Thyroid gland (tissue), 4 donors: ENCODE measurements at regions of chr21 and their contacts with region 1.

Region 1: DNA sequence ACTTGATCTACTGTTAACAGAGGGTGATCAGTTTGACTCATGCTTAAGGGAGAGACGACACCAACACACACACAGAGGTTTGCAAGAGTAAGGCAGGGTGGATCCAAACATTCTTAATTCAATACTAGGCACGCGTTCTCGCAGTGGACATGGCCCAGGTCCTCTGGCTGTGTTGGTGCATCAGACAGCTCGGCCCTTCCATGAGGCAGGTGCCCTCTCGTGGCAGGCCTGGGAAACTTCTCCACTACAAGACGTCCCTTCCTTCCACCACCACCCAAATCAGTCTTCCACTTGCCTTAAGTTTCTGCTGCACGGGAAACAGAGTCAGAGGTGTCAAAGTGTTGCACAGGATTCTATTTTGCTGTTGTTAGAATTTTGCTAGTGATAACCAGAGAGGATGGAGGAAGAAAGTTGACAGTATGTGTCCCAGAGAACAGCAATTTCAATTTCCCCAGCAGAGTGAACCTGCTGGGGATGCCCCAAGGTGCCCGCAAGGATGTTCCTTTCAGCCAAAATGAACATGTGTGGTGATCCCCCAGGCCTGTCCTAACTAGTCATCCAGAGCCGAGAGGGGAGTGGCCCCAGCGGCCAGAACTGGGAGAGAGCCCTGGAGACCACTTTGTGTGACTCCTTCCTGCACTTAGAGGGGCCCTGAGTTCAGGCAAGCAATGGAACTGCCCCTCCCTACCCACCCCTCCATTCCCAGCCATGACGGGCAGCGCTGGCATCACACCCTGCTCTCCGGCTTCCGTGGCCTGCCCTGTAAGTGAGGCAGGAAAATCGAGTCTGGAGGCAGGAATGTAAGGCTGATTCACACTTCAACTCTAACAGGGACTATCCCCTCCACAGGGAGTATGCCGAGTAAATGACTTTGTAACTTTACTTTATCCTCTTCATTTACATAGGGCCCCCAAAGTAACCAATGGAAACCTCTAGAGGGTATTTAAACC is 34.8 kb downstream of the MX1 start:
- DNase-seq: peak; percentile 81 to 87
- H3K4me3 ChIP-seq: no peak overlapping the region
- H3K27ac ChIP-seq: peak overlapping the region in 2 of 3 donors; percentile 42 to 70
- H3K4me1 ChIP-seq: peaks cover 18 to 25% of the 10 kb centered on the region in 2 donors
- H3K27me3 ChIP-seq: no peaks in the 10 kb centered on the region
- CTCF ChIP-seq: peak; percentile 40 to 85 (median 82)
- POLR2A ChIP-seq: no peak

Region 2: DNA sequence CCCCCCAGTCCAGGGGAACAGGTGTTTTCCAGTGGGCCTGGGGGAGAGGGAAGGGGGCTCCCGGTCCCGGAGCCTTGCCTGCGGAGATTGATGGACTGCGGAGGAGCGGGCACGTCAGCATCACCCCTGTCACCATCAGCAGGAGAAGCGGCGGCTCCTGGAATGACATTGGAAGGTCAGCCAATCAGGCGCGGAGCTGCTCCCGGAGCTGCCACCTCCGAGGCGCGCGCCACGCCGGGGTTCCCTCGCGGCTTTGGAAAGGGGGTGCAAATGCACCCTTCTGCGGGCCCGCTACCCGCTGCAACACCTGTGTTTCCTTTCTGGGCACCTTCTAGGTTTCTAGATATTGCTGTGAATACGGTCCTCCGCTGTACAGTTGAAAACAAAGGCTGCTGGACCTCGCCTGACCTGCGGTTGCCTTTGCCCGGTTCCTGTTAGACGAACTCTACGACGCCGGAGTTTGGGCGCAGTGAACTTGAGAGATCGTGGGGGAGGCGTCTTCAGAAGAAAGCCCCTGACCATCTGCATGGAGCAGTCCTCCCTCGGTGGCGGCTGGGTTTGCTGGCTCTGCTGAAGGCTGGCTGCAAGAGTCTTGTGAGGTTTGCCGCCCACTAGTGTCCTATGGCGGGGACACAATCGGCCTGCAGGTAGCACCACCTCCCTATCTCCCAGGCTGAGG is 619.2 kb before region 1 on chr21:
- intact Hi-C with region 1: no loop called
- DNase-seq: peak; percentile 41 to 44
- H3K4me3 ChIP-seq: no peak overlapping the region
- H3K27ac ChIP-seq: no peak overlapping the region
- H3K4me1 ChIP-seq: peaks cover 0 to 6% of the 10 kb centered on the region in 2 donors
- H3K27me3 ChIP-seq: no peaks in the 10 kb centered on the region
- CTCF ChIP-seq: peak in 3 of 6 experiments; percentile 22 to 41 (median 39)
- POLR2A ChIP-seq: no peak

Region 3: GRCh38 chr21:41369920-41370839 is 90.7 kb before region 1 on chr21:
- intact Hi-C with region 1: loop called (anchors 10 kb)
- DNase-seq: no peak
- H3K4me3 ChIP-seq: peak overlapping the region in 1 of 3 donors; percentile 8
- H3K27ac ChIP-seq: peak overlapping the region in 1 of 3 donors; percentile 54
- H3K4me1 ChIP-seq: peaks cover 7 to 14% of the 10 kb centered on the region in 2 donors
- H3K27me3 ChIP-seq: no peaks in the 10 kb centered on the region
- CTCF ChIP-seq: no peak
- POLR2A ChIP-seq: no peak